ENCODE measurements at regions of chr13 and their contacts with region 1.

Region 1: DNA sequence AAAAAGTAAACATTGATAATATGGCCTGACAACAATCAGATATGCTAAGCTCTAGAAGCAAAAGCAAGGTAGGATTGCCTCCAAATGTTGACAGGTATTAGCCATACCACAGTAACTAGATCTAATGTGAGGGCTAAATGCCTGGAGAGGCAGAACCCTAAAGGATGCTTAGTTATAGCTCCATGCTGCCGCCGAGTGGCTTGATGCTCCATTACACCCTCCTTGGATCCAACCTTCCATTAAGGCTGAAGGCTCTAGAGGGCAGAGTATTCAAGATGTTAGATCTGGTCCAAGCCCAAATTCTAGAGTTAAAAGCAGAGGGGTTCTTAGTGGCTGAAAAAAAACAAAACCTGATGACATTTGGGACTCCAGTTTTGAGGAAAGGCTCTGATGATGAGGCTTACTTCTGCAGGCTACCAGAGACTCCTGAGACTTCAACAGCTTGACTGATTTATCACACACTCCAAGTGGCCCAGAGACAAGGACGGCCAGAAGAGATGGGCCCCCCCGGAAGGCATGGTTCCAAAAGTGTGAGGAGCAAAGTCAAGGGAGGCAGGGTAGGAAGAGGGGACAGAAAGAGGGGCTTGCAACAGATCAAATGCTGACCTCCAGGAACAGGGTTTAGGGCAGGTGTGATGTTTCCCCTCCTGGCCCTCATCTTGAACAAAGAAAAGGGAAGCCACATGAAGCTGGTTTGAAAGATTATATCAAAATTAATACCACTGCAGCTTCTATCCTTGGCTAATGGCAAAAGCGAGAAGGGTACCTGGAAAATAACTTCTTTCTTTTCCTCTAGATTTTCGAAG is 21.9 kb upstream of the CPB2 start:
- DNase-seq: peak; percentile 23
- H3K4me3 ChIP-seq: no peak overlapping the region
- CTCF ChIP-seq: peak; percentile 91

Region 2: DNA sequence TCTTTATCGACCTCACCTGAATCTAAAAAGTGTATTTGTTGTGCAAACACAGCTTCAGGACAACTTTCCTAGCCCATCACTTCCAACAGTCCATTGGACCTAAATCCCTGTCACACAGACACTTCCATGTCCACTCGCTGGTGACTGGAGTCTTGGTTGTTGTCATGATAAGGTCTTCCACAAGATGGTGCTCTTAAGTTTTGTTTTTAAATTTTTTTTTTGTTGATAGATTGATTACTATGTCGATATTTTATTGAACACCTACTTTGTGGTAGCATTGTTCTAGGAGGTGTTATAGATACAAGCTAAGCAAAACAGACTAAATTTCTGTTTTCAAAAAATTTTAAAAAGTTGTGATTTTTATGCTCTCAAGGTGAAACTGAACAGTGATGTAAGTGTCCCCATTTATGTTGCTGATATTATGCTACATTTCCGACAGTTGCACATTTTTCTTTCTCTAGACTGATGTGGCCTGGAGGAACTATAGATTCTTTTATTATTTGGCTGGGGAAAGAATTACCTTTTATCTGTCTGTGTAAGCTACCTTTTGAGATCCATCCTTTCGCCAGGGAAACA is 503.2 kb before region 1 on chr13:
- CTCF ChIA-PET with region 1: interaction called, 30 read pairs
- POLR2A ChIA-PET with region 1: no interaction called
- DNase-seq: no peak
- H3K4me3 ChIP-seq: no peak overlapping the region
- CTCF ChIP-seq: peak; percentile 31

Region 3: DNA sequence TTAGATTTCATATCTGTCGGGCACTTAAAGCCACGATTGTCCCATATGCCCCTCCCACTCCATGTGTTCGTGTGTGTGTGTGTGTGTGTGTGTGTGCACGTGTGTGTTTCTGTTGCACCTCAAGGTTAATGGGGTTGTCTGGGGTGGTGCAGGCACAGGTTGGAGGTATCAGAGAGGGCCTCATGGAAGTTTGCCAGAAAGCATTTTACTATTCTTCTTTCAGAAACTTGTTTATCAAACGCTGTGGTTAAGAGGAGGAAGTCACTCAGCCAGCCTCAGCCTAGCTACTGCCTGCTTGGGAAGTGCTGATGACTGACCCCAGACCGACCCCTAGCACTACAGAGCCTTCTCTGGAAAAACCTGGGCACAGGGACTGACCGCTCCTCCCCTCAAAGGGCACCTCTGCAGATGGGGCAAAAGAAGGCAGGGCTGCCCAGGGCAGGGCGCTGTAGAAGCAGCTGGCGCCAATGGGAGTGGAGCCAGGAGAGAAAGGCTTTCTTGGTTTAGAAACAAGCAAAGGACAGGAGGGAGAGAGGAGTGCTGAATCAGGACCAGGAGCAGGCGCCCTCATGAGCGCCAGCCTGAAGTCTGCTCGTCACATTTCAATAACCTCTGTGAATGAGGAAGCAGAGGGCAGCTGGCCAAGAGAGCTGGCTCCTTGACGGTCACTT is 279.1 kb before region 1 on chr13:
- CTCF ChIA-PET with region 1: no interaction called
- POLR2A ChIA-PET with region 1: no interaction called
- DNase-seq: no peak
- H3K4me3 ChIP-seq: no peak overlapping the region
- CTCF ChIP-seq: no peak

Region 4: GRCh38 chr13:46094478-46094877 is 32.3 kb before region 1 on chr13:
- CTCF ChIA-PET with region 1: interaction called, 14 read pairs
- POLR2A ChIA-PET with region 1: no interaction called
- DNase-seq: no peak
- H3K4me3 ChIP-seq: no peak overlapping the region
- CTCF ChIP-seq: no peak

Region 5: DNA sequence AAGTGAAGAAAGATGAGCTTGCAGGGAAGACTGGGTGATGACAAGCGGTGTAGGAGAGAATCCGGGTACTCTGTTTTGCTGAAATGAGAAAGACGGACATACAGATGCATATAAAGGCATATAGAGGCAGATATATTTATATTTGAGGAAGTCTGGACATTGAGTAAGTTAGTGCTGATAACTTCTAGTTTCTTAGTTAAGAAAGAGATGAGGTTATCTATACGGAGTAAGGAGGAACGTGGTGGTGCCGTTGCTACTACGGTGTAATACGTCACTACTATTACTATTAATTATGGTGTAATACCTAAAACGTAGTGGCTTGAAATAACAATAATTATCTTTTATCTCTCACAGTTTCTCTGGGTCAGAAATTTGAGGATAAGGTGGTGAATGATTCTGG is 12.1 kb before region 1 on chr13:
- CTCF ChIA-PET with region 1: interaction called, 29 read pairs
- POLR2A ChIA-PET with region 1: no interaction called
- DNase-seq: no peak
- H3K4me3 ChIP-seq: no peak overlapping the region
- CTCF ChIP-seq: no peak

Region 6: GRCh38 chr13:46160471-46161066 is 33.8 kb after region 1 on chr13:
- CTCF ChIA-PET with region 1: interaction called, 29 read pairs
- POLR2A ChIA-PET with region 1: no interaction called
- DNase-seq: no peak
- H3K4me3 ChIP-seq: no peak overlapping the region
- CTCF ChIP-seq: peak; percentile 68

Region 7: DNA sequence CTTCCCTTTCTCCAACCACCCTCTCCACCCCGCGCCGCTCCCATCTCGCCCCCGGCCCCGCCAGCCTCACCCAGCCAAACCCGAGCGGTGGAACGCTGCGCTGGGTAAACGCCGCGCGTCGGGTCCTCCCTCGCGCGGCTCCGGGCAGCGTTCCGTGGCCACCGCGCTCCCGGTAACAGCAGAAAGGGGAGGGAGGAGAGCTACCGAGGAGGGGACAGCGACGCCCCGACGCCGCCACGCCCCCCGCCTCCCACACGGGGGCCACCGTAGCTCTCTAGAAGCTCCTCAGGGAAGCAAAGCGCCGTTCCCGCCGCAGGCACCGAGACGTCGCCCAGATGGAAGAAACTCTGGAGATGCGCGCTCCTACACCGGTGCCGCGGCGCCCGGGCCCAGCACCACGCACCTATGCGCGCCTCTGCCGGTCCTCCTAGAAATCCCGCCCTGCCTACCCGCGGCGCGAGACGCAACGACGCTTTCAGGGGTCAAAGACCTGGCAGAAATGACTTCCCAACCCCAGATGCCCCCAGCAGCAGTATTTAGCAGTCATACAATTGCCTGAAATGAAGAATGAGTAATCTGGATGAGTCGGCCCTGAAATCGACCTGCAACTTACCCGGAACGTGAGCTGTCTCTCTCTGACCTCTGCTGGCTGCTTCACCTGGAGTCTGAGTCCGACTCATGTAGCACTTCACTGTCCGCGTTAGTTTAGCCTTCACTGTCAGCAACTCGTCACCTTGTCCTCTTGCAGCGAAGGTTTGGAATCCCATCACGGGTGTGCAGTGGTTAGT is 260.5 kb after region 1 on chr13 and contains the start of gene RUBCNL:
- CTCF ChIA-PET with region 1: no interaction called
- POLR2A ChIA-PET with region 1: no interaction called
- DNase-seq: no peak
- H3K4me3 ChIP-seq: peak within 1 kb of the TSS; percentile 56
- CTCF ChIP-seq: no peak

Measured in AG04449 (cell line).